ENCODE measurements at regions of chr9 and their contacts with region 1.

Region 1: GRCh38 chr9:109918339-109919163 is 138.6 kb downstream of the PALM2AKAP2 start:
- DNase-seq: peak; percentile 85
- H3K4me3 Mint-ChIP-seq: peak overlapping the region; percentile 85
- H3K27ac Mint-ChIP-seq: peak overlapping the region; percentile 97
- H3K4me1 Mint-ChIP-seq: peaks cover 50% of the 10 kb centered on the region
- H3K27me3 Mint-ChIP-seq: no peaks in the 10 kb centered on the region

Region 2: DNA sequence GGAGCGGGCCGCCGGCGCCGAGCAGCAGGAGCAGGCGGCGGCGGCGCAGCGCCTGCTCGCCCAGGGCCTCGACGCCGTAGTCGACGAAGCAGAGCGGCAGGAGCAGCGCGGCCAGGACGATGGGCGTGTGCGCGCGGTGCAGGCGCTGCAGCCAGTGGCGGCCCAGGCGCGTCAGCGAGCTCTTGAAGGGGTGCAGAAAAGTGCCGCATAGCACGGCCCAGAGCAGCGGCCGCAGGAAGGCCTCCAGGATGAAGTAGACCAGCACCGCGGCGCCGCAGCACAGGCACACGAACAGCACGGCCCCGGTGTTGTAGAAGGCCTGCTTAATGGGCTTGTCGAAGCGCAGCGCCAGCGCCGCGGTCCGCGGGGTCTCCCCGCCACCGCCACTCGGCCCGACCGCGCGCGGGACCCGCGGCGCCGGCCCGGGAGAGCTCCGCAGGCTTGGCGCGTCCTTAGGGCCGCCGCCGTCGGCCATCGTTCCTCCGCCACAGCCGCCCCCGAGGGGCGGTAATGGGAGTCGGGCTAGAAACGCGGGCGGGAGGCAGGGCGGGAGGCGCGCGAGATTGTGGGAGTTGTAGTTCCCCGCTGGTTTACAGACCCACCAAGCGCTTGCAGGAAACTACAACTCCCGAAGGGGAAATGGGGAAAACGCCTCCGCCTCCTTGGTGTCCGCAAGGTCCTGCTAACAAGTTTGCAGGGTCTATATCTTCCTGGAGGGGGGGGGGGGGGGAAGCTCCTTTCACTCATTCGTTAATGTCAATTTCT is 798.9 kb before region 1 on chr9 and contains the start of gene TMEM245:
- intact Hi-C with region 1: loop called (anchors 10 kb)
- DNase-seq: peak; percentile 98
- H3K4me3 Mint-ChIP-seq: peak within 1 kb of the TSS; percentile 90
- H3K27ac Mint-ChIP-seq: peak within 1 kb of the TSS; percentile 94
- H3K4me1 Mint-ChIP-seq: peaks cover 38% of the 10 kb centered on the region
- H3K27me3 Mint-ChIP-seq: no peaks in the 10 kb centered on the region
- total RNA-seq, gene TMEM245: 26.7 and 27.0 TPM in 2 replicates

Region 3: DNA sequence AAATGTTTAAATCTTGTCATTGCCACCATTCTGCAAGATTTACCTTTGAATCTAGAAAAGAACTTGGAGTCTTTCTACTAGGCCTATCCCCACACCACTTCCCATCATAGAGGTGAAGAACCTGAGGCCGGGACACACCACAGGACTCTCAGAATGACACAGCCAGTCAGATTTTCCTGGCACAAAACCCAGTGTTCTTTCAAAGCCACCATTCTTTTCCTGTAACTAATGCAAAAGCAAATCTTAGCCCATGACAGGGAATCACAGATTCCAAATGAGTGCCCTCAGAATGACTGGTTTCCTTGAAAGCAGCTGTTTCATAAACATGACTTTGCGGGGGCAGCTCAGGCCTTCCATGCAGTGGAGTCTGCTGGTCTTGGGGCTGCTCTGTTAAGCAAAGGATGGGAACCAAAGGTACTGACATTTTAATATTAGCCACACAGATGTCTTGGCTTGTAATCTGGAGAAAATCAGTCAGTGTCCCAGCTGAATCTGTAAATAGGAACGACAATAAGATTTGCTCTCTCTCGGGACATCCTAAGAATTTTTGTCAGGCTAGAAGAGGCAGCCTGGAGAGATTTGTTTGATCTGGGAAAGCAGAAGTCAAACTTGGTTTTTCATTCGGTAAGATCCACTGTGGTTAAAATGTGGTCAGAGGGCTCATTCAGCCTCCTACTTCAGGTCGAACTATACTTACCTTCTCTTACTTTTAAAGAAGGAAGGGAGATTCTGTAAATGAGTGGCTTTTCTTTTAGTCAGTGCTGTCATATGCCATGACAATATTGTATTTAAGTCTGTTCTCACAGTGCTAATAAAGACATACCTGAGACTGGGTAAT is 23.4 kb before region 1 on chr9:
- intact Hi-C with region 1: loop called (anchors 1 kb)
- DNase-seq: peak; percentile 80
- H3K4me3 Mint-ChIP-seq: peak overlapping the region; percentile 56
- H3K27ac Mint-ChIP-seq: peak overlapping the region; percentile 92
- H3K4me1 Mint-ChIP-seq: peaks cover 53% of the 10 kb centered on the region
- H3K27me3 Mint-ChIP-seq: no peaks in the 10 kb centered on the region

Region 4: DNA sequence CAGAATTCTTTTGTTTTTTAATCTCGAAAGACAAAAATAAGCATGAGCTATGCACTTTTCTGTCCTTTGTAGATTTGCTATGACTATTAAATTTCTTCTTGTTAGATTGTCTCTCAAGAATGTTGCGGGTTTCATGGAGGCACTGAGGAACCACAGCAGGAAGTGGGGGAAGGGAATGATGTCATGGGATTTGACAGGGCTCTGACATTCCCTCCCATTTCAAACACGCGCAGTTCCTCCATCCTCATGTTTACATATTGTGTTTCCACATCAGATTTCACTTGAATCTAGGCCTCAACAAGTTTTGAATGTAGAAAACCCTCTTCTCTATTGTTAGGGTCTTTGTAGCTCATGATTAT is 16.3 kb after region 1 on chr9:
- intact Hi-C with region 1: loop called (anchors 1 kb)
- DNase-seq: peak; percentile 65
- H3K4me3 Mint-ChIP-seq: peak overlapping the region; percentile 17
- H3K27ac Mint-ChIP-seq: peak overlapping the region; percentile 92
- H3K4me1 Mint-ChIP-seq: peaks cover 31% of the 10 kb centered on the region
- H3K27me3 Mint-ChIP-seq: no peaks in the 10 kb centered on the region

Region 5: DNA sequence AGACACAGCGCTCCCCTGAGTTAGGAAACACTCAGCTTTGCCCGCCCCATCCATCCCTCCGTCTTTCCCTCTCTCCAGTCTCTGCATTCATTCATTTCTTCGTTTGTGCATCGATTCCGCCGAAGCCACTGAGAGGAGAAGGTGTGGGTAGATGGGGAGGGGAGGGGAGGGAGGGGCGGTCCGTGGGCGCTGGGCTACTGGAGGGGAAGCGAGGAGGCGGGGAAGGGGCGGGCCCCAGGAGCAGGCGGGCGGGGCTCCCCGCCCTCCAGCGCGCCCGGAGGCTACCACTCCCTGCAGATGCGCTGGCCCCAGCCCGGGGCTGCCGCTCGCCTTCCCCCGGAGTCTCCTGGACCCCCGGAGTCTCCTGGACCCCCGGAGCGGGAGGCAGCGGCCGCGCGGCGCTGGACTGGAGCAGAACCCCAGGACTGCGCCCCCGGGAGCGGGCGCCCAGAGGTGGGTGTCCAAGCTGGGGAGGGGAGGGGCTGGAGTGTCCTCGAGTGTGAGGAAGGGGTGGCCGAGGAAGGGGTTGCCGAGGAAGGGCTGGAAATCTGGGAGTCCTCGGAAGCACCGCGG is 129.9 kb after region 1 on chr9:
- intact Hi-C with region 1: loop called (anchors 1 kb)
- DNase-seq: peak; percentile 95
- H3K4me3 Mint-ChIP-seq: peak overlapping the region; percentile 98
- H3K27ac Mint-ChIP-seq: peak overlapping the region; percentile 93
- H3K4me1 Mint-ChIP-seq: peaks cover 40% of the 10 kb centered on the region
- H3K27me3 Mint-ChIP-seq: peaks cover 8% of the 10 kb centered on the region

Region 6: DNA sequence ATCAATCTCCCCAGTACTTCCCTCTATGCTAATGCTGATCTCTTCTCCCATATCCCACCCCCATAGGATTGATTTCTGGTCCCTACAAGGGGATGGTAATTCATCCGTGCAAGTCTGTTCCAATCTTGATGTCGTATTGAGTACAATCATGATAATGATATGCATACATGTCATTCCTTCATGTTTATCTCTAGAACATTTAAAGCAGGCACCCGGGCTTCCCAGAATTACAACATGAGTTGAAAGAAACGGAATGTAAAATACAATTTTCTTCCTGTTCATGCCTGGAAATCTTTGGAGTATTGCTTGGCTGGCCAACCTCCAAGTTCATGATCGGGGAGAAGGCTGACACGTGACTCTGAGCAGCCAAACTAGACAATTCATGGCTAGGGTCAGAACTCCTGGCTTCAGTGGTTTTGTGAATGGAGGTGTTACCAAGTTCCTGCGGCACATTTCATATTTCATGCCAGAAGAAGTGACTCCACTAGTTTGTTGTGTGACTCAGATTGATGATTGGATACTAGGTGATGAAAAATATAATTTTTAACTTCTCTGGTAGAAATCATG is 222.8 kb after region 1 on chr9:
- intact Hi-C with region 1: no loop called
- DNase-seq: no peak
- H3K4me3 Mint-ChIP-seq: no peak overlapping the region
- H3K27ac Mint-ChIP-seq: no peak overlapping the region
- H3K4me1 Mint-ChIP-seq: peaks cover 48% of the 10 kb centered on the region
- H3K27me3 Mint-ChIP-seq: no peaks in the 10 kb centered on the region

Measured in activated CD4-positive, alpha-beta T cell treated with anti-CD3 and anti-CD28 coated beads, Interleukin-2, amount 10 ng/mL, durations not matched to agents 24 days and 14 days (primary cell).